Heart right ventricle (tissue), 16 donors: ENCODE measurements at regions of chr2 and their contacts with region 1.

Region 1: DNA sequence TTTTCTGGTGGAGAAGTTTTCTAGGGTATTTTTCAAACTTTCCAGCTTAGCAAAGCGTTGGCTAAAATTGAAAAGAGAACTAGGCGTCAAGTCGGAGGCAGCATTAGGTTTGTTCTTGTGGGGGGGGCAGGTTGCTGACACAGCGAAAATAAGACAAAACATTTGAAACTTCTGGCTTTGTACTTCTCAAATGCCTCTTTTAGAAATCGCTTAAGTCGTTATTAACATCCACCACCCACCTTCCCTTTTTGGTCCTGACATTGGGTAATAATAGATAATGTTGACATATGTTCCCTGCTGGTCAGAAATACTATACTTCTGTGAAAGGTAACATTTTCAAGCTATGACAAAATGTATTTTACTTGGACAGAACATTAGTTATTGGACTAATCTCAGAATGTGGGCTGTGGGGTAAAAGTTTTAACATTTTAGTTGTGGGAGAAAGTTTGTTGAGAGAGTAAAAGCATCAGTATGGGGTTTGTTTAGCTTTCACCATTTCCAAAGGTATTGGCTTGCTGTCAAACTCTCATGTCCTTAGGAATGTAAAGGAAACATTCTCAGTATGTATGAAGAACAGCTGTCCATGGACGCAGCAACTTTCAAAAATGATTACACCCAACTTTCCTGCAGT is 88.1 kb upstream of the ZEB2 start:
- DNase-seq: peak; percentile 14 to 25
- ATAC-seq: peak in 7 of 8 donors; percentile 61 to 76 (median 69)
- H3K4me3 ChIP-seq: no peak overlapping the region
- H3K27ac ChIP-seq: peak overlapping the region in 6 of 10 donors; percentile 39 to 91 (median 48)
- H3K4me1 ChIP-seq: peaks cover 0 to 48% (median 0%) of the 10 kb centered on the region in 9 donors
- H3K27me3 ChIP-seq: no peaks in the 10 kb centered on the region
- CTCF ChIP-seq: no peak

Region 2: DNA sequence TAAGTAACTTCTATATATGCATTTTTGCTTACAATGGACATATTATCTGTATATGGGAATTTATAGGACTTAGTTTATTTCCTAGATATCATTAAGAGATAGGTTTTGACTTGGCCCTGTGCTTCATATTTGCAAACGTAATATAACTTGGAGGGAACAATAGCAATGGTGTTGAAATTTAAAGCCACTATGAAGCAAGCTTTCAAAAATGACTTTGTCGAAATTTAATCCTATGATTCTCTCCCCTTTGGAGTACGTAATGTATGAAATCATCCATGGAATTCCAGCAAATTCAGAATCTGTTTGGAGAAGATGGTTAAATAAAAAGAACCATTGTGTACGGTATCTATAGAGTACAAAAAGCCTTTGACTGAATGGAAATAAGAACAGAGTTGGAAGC is 992.4 kb before region 1 on chr2:
- intact Hi-C with region 1: no loop called
- DNase-seq: no peak
- ATAC-seq: no peak
- H3K4me3 ChIP-seq: no peak overlapping the region
- H3K27ac ChIP-seq: no peak overlapping the region
- H3K4me1 ChIP-seq: no peaks in the 10 kb centered on the region
- H3K27me3 ChIP-seq: no peaks in the 10 kb centered on the region
- CTCF ChIP-seq: no peak

Region 3: DNA sequence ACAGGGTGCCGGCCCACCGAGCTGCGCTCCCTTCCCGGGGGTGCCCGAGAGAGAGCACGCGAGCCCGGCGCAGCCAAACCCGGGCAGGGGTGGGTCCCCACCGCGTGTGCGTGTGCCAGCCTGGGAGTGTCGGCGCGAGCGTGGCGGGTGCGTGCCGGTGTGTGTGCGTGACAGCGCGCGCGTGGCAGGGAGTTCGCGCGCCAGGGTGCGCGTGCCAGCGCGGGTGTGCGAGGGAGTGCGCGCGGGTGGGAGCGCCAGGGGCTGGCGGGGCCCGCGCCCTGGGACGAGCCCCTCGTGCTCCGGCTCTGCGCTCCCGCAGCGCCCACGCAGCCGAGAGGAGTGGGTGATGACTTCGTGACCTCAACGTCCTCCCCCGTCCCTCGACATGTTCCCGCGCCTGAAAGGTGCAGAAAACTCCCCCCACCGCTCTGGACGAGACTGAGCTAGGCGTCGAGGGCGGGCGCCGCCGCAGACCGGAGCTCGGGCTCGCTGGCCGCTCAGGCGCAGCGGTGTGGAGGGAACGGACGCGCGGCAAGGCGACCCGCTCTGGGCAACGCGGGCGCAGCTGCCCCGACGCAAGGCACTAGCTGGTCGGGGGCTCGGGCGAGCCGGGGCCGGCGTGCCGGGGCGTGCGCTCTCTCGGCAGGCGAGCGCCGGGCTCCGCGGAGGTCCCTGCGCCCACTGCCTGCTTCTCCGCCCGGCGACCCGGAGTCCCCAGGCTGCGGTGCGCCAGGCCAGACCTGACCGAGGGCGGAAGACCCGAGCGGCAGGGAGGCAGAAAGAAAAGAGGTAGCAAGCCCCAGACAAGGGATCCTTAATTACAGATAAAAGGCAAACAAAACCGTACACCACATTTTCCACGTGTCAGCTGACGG is 670.9 kb before region 1 on chr2:
- intact Hi-C with region 1: no loop called
- DNase-seq: peak; percentile 10 to 35
- ATAC-seq: peak; percentile 60 to 82 (median 76)
- H3K4me3 ChIP-seq: peak overlapping the region; percentile 27 to 64 (median 58)
- H3K27ac ChIP-seq: peak overlapping the region in 9 of 10 donors; percentile 11 to 81 (median 62)
- H3K4me1 ChIP-seq: peaks cover 0 to 22% (median 0%) of the 10 kb centered on the region in 9 donors
- H3K27me3 ChIP-seq: peaks cover 0 to 40% (median 6%) of the 10 kb centered on the region in 7 donors
- CTCF ChIP-seq: no peak

Region 4: GRCh38 chr2:144570566-144570965 is 37.4 kb before region 1 on chr2:
- intact Hi-C with region 1: no loop called
- DNase-seq: no peak
- ATAC-seq: no peak
- H3K4me3 ChIP-seq: no peak overlapping the region
- H3K27ac ChIP-seq: no peak overlapping the region
- H3K4me1 ChIP-seq: no peaks in the 10 kb centered on the region
- H3K27me3 ChIP-seq: no peaks in the 10 kb centered on the region
- CTCF ChIP-seq: no peak

Region 5: DNA sequence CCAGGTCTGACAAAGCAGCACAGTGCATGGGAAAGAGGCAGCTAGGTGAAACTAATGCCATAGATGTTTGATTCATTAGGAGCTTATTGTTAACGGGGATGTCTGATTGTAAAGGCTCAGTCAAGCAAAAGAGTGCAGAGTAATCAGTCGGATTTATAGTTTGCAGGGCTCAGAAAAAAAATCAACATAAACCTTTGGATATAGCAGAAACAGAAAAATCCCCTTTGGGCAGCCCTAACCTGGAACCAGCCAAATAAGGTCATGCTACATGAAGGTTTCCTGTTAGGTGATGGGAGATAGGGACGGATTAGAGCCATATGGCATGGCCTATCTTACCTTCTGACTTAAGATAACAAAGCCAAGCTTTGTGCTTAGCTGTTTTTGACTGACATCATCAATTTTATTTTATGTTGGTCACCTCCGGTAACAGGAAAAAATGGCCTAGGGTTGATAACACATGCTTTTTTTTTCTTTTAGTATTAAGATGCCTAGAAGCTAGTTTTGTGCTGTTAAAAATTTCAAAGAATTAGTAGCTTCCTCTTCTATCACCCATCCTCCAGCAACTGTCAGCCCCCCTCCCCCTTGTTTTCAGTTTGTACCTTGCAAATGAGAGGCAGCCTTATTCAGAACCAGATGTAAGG is 27.4 kb before region 1 on chr2:
- intact Hi-C with region 1: loop called in 1 of 10 experiments (anchors 1 kb)
- DNase-seq: no peak
- ATAC-seq: no peak
- H3K4me3 ChIP-seq: no peak overlapping the region
- H3K27ac ChIP-seq: no peak overlapping the region
- H3K4me1 ChIP-seq: peaks cover 0 to 29% (median 0%) of the 10 kb centered on the region in 9 donors
- H3K27me3 ChIP-seq: no peaks in the 10 kb centered on the region
- CTCF ChIP-seq: no peak